CD8-positive, alpha-beta T cell (primary cell): ENCODE measurements at regions of chr17 and their contacts with region 1.

Region 1: GRCh38 chr17:14950216-14950615 is 314.9 kb downstream of the PMP22 start:
- DNase-seq: no peak
- ATAC-seq: no peak
- H3K4me3 ChIP-seq: no peak overlapping the region
- H3K4me3 Mint-ChIP-seq: no peak overlapping the region
- H3K27ac ChIP-seq: no peak overlapping the region
- H3K27ac Mint-ChIP-seq: no peak overlapping the region
- H3K4me1 ChIP-seq: no peaks in the 10 kb centered on the region
- H3K4me1 Mint-ChIP-seq: no peaks in the 10 kb centered on the region
- H3K27me3 ChIP-seq: no peaks in the 10 kb centered on the region
- H3K27me3 Mint-ChIP-seq: peaks cover 16% of the 10 kb centered on the region
- CTCF ChIP-seq: no peak

Region 2: DNA sequence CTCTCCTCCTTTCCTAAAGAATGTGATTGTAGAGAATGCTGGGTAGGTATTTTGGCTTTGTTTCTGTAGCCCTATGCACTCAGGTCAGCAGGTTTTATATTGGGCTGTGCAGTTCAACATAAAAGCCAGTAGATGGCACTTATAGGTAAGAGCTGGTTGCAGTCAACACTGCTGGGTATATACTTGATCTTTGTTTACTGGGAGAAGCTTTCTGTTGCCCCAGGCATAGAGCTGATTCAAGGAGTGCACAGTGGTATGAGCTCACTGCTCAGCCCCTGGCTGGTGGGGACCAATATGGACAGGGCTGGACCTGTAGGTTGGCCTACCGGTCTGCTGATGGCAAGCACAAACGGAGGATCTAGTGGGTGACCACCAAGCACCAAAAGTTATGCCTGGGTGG is 64.0 kb before region 1 on chr17:
- CTCF ChIA-PET with region 1: no interaction called
- POLR2A ChIA-PET with region 1: no interaction called
- intact Hi-C with region 1: loop called in 1 of 2 experiments (anchors 10 kb)
- DNase-seq: no peak
- ATAC-seq: no peak
- H3K4me3 ChIP-seq: no peak overlapping the region
- H3K4me3 Mint-ChIP-seq: no peak overlapping the region
- H3K27ac ChIP-seq: no peak overlapping the region
- H3K27ac Mint-ChIP-seq: no peak overlapping the region
- H3K4me1 ChIP-seq: no peaks in the 10 kb centered on the region
- H3K4me1 Mint-ChIP-seq: no peaks in the 10 kb centered on the region
- H3K27me3 ChIP-seq: no peaks in the 10 kb centered on the region
- H3K27me3 Mint-ChIP-seq: peaks cover 19% of the 10 kb centered on the region
- CTCF ChIP-seq: no peak

Region 3: DNA sequence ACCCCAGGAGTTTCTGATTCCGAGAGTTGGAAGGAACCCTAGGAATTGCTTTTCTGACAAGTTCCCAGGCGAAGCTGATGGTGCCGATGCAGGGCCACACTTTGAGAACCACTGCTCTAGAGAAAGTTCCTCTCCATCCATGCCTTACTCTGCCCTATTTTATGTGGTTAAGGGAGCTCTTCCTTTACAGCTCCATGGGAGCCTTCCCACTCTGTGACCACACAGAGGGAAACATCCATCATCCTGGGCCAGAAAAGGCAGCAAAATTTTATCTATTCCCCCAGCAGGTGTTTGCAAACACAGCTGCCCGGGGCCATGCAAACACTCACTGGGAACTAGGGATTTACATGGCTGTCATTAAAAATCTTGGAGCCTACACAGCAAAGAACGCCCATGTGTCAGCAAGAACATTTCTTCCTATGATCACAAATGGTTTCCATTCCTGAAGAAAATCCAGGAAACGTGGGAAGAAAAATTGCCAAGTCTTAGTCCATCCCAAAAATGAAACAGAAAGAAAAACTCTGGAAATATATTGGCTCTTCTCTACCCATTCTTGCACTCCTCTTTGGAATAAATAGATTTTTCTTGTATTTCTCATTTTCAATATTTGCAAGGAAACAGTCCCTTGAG is 62.2 kb after region 1 on chr17:
- CTCF ChIA-PET with region 1: no interaction called
- POLR2A ChIA-PET with region 1: no interaction called
- intact Hi-C with region 1: no loop called
- DNase-seq: no peak
- ATAC-seq: no peak
- H3K4me3 ChIP-seq: no peak overlapping the region
- H3K4me3 Mint-ChIP-seq: no peak overlapping the region
- H3K27ac ChIP-seq: no peak overlapping the region
- H3K27ac Mint-ChIP-seq: no peak overlapping the region
- H3K4me1 ChIP-seq: no peaks in the 10 kb centered on the region
- H3K4me1 Mint-ChIP-seq: no peaks in the 10 kb centered on the region
- H3K27me3 ChIP-seq: no peaks in the 10 kb centered on the region
- H3K27me3 Mint-ChIP-seq: peaks cover 3% of the 10 kb centered on the region
- CTCF ChIP-seq: no peak